ENCODE measurements at regions of chr3 and their contacts with region 1.

Region 1: GRCh38 chr3:150495563-150496168 is 50.6 kb downstream of the SERP1 start:
- DNase-seq: peak in 1 of 2 donors; percentile 75
- H3K4me3 ChIP-seq: no peak overlapping the region
- H3K27ac ChIP-seq: no peak overlapping the region
- H3K4me1 ChIP-seq: no peaks in the 10 kb centered on the region
- H3K27me3 ChIP-seq: no peaks in the 10 kb centered on the region
- CTCF ChIP-seq: peak in 5 of 7 experiments; percentile 73 to 82 (median 79)
- EP300 ChIP-seq: no peak
- POLR2A ChIP-seq: no peak

Region 2: GRCh38 chr3:150227839-150228238 is 267.8 kb before region 1 on chr3:
- intact Hi-C with region 1: loop called (anchors 10 kb)
- DNase-seq: peak; percentile 37 to 80
- H3K4me3 ChIP-seq: no peak overlapping the region
- H3K27ac ChIP-seq: no peak overlapping the region
- H3K4me1 ChIP-seq: peaks cover 0 to 13% (median under 1%) of the 10 kb centered on the region in 4 donors
- H3K27me3 ChIP-seq: no peaks in the 10 kb centered on the region
- CTCF ChIP-seq: peak in 4 of 7 experiments; percentile 18 to 47 (median 36)
- EP300 ChIP-seq: no peak
- POLR2A ChIP-seq: no peak

Region 3: DNA sequence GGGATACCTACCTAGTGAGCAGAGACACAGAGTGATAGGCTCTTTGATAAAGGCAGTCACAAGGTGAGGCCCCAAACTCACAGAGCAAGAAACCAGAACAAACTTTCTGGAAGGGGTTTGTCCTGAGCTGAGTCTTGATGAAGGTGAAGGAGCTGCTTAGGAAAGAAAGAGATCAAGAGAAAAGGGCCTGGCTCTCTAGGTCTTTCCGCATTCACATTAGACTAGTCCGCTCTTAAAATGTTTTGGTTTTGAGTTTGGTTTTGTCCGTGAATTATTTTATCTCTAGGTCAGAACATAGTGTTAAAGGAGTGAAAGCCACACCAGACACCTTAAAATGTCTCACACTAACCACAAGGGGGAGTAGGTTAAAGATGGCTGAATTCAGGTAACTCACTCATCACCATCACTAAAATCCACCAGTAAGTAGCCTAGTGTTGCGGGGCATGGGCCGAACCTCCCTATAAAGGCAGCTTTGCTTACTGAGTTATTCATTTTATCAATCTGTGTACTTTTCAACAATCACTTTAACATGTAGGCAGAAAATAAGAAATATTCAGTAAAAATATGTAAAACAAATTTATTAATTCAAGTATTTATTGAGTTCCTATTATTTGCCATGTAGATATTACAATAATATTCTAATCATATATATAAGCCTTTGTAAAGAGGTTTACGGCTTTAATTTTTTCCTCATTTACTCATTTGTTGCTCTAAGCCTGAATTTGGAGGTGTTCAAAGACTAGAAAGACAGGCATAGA is 209.1 kb before region 1 on chr3:
- intact Hi-C with region 1: loop called (anchors 10 kb)
- DNase-seq: peak in 1 of 2 donors; percentile 71
- H3K4me3 ChIP-seq: no peak overlapping the region
- H3K27ac ChIP-seq: peak overlapping the region in 1 of 5 donors; percentile 34
- H3K4me1 ChIP-seq: no peaks in the 10 kb centered on the region
- H3K27me3 ChIP-seq: no peaks in the 10 kb centered on the region
- CTCF ChIP-seq: peak in 5 of 7 experiments; percentile 29 to 69 (median 55)
- EP300 ChIP-seq: no peak
- POLR2A ChIP-seq: no peak

Region 4: GRCh38 chr3:150409512-150410310 is 86.0 kb before region 1 on chr3:
- intact Hi-C with region 1: loop called (anchors 10 kb)
- DNase-seq: peak; percentile 78 to 94
- H3K4me3 ChIP-seq: peak overlapping the region; percentile 79 to 98 (median 90)
- H3K27ac ChIP-seq: peak overlapping the region; percentile 99 to 100 (median 100)
- H3K4me1 ChIP-seq: peaks cover 6 to 43% (median 34%) of the 10 kb centered on the region in 4 donors
- H3K27me3 ChIP-seq: no peaks in the 10 kb centered on the region
- CTCF ChIP-seq: peak in 5 of 7 experiments; percentile 39 to 61 (median 45)
- EP300 ChIP-seq: no peak
- POLR2A ChIP-seq: no peak